Prostate gland (tissue), 2 donors: ENCODE measurements at regions of chr18 and their contacts with region 1.

Region 1: DNA sequence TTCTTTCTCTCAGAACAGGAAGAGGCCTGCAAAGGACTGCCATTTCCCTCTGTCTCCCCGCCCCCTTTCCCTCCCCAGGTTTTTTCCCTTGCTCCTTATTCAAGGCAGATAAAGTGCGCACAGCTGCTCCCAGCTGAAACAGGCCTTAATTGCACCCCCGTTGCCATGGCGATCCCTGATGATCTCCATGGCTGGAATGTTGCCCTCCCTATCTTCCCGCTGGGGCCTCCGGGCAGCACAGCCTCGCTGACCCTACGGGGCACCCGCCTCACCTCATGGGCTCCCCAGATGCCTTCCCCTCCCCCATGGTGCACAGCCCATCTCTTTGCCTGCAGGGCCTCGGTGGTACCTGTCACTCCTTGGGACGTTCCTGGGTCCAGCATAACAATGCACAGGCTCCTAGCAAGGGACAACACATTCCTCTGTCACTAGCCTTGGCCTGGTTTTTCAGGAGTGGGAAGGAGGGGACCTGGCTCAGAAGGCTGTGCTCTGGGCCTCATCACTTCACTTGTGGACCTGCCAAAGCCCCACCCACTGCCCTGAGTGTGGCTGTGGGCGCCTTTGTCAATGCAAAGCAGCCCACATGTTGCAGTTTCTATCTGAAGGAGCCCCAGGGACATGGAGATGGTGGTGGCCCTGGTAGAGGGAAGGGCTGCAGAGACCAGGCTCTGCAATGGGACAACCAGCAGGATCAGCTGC is 115.0 kb downstream of the CELF4 start:
- DNase-seq: no peak
- H3K4me3 ChIP-seq: no peak overlapping the region
- H3K27ac ChIP-seq: no peak overlapping the region
- H3K4me1 ChIP-seq: peaks cover 6% of the 10 kb centered on the region
- H3K27me3 ChIP-seq: no peaks in the 10 kb centered on the region
- CTCF ChIP-seq: no peak
- POLR2A ChIP-seq: no peak

Region 2: GRCh38 chr18:37516361-37516853 is 65.8 kb after region 1 on chr18:
- intact Hi-C with region 1: loop called (anchors 10 kb)
- DNase-seq: no peak
- H3K4me3 ChIP-seq: no peak overlapping the region
- H3K27ac ChIP-seq: no peak overlapping the region
- H3K4me1 ChIP-seq: no peaks in the 10 kb centered on the region
- H3K27me3 ChIP-seq: peaks cover 3% of the 10 kb centered on the region
- CTCF ChIP-seq: no peak
- POLR2A ChIP-seq: no peak